Left colon (tissue), 2 donors: ENCODE measurements at regions of chr6 and their contacts with region 1.

Region 1: GRCh38 chr6:88982720-88983119 is 19.3 kb upstream of the RNGTT start:
- DNase-seq: no peak
- ATAC-seq: peak; percentile 92

Region 2: DNA sequence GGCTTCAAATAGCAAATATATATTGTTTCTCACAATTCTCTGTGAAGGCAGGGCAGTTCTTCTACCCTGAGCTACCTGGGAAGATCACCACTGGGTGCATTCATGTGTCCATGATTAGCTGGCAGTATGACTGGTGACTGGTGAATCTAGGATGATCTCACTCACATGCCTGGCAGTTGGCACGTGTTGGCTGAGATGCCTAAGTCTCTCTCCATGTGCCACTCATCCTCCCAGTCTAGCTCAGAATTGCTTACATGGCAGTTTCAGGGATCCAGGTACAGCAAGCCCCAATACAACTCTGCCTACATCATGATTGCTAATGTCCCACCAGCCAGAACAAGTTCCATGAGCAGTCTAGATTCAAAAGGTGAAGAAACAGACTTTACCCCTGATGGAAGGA is 469.8 kb before region 1 on chr6:
- intact Hi-C with region 1: no loop called
- DNase-seq: no peak
- ATAC-seq: no peak

Region 3: DNA sequence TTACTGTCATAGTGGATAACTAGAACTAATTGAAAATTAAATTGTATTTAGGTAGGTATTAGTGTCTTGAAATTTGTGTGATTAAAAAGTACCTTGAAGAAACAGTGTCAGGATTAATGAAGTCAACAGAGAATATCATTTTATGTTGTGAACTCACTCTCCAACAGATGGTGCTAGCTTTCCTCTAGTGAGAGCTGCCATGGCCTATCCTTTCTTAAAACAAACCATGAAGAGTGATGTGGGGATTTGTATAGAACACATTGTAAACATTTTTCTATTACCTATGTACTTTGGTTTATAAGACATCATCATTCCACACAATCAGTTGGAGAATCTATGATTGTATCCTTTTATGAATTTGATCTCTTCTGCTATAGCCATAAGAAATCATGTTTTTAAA is 139.9 kb after region 1 on chr6:
- intact Hi-C with region 1: loop called in 1 of 2 experiments (anchors 10 kb)
- DNase-seq: no peak
- ATAC-seq: peak; percentile 91

Region 4: DNA sequence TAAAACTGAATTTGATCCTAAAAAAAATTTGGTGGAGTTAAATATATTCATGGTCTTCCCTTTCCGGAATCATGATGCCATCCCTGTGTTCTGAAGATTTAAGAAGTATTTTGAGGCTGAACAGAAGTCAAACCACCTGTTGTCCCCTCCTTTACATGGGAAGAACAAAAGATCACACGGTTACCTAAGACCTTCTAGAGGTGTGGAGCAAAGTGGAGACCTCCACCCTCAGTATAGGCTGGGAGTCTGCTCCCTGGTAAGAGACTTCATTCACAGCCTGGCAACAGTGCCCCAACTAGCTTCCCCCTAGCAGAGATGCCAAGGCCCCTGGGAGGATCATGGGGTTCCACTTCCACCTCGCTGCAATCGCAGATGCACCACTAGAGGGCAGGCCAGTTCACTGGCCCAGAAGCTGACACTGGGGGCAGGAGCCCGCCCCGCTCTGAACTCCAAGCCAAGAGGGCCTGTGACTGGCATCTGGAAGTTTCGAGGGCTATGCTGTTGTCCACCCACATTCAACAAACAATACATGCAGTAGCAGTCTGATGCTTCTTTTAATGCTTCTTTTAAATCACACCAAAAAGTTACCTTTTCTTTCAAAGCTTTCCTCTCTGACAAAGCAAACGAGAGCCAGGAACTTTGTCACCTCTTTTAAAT is 389.3 kb after region 1 on chr6:
- intact Hi-C with region 1: loop called in 1 of 2 experiments (anchors 10 kb)
- DNase-seq: peak; percentile 72 to 84
- ATAC-seq: peak; percentile 72